Caco-2 (cell line): ENCODE measurements at regions of chr19 and their contacts with region 1.

Region 1: GRCh38 chr19:56140583-56141416 is at the start of gene ZNF444:
- DNase-seq: peak; percentile 99 to 100
- H3K4me3 ChIP-seq: peak within 1 kb of the TSS; percentile 70
- H3K4me3 Mint-ChIP-seq: peak within 1 kb of the TSS; percentile 87
- H3K27ac Mint-ChIP-seq: peak within 1 kb of the TSS; percentile 97
- H3K4me1 ChIP-seq: peaks cover 21% of the 10 kb centered on the region
- H3K4me1 Mint-ChIP-seq: peaks cover 36% of the 10 kb centered on the region
- H3K27me3 ChIP-seq: no peaks in the 10 kb centered on the region
- H3K27me3 Mint-ChIP-seq: no peaks in the 10 kb centered on the region
- CTCF ChIP-seq: no peak
- total RNA-seq, gene ZNF444: 92.2 and 95.6 TPM in 2 replicates

Region 2: GRCh38 chr19:54463531-54464043 is 1677.2 kb before region 1 on chr19 and contains the start of gene LENG9:
- CTCF ChIA-PET with region 1: no interaction called
- POLR2A ChIA-PET with region 1: no interaction called
- intact Hi-C with region 1: loop called (anchors 5 kb)
- DNase-seq: peak; percentile 99 to 100
- H3K4me3 ChIP-seq: peak within 1 kb of the TSS; percentile 81
- H3K4me3 Mint-ChIP-seq: peak within 1 kb of the TSS; percentile 92
- H3K27ac Mint-ChIP-seq: peak within 1 kb of the TSS; percentile 99
- H3K4me1 ChIP-seq: peaks cover 15% of the 10 kb centered on the region
- H3K4me1 Mint-ChIP-seq: peaks cover 25% of the 10 kb centered on the region
- H3K27me3 ChIP-seq: no peaks in the 10 kb centered on the region
- H3K27me3 Mint-ChIP-seq: no peaks in the 10 kb centered on the region
- CTCF ChIP-seq: no peak
- total RNA-seq, gene LENG9: 6.7 and 6.9 TPM in 2 replicates

Region 3: GRCh38 chr19:56053596-56053995 is 87.2 kb before region 1 on chr19:
- CTCF ChIA-PET with region 1: no interaction called
- POLR2A ChIA-PET with region 1: no interaction called
- intact Hi-C with region 1: no loop called
- DNase-seq: no peak
- H3K4me3 ChIP-seq: no peak overlapping the region
- H3K4me3 Mint-ChIP-seq: no peak overlapping the region
- H3K27ac Mint-ChIP-seq: no peak overlapping the region
- H3K4me1 ChIP-seq: no peaks in the 10 kb centered on the region
- H3K4me1 Mint-ChIP-seq: no peaks in the 10 kb centered on the region
- H3K27me3 ChIP-seq: no peaks in the 10 kb centered on the region
- H3K27me3 Mint-ChIP-seq: peaks cover 6% of the 10 kb centered on the region
- CTCF ChIP-seq: no peak

Region 4: GRCh38 chr19:56105090-56105701 is 35.6 kb before region 1 on chr19:
- CTCF ChIA-PET with region 1: no interaction called
- POLR2A ChIA-PET with region 1: no interaction called
- intact Hi-C with region 1: no loop called
- DNase-seq: peak in 1 of 2 experiments; percentile 56
- H3K4me3 ChIP-seq: no peak overlapping the region
- H3K4me3 Mint-ChIP-seq: no peak overlapping the region
- H3K27ac Mint-ChIP-seq: peak overlapping the region; percentile 48
- H3K4me1 ChIP-seq: no peaks in the 10 kb centered on the region
- H3K4me1 Mint-ChIP-seq: peaks cover 6% of the 10 kb centered on the region
- H3K27me3 ChIP-seq: no peaks in the 10 kb centered on the region
- H3K27me3 Mint-ChIP-seq: no peaks in the 10 kb centered on the region
- CTCF ChIP-seq: peak; percentile 36 to 46

Region 5: DNA sequence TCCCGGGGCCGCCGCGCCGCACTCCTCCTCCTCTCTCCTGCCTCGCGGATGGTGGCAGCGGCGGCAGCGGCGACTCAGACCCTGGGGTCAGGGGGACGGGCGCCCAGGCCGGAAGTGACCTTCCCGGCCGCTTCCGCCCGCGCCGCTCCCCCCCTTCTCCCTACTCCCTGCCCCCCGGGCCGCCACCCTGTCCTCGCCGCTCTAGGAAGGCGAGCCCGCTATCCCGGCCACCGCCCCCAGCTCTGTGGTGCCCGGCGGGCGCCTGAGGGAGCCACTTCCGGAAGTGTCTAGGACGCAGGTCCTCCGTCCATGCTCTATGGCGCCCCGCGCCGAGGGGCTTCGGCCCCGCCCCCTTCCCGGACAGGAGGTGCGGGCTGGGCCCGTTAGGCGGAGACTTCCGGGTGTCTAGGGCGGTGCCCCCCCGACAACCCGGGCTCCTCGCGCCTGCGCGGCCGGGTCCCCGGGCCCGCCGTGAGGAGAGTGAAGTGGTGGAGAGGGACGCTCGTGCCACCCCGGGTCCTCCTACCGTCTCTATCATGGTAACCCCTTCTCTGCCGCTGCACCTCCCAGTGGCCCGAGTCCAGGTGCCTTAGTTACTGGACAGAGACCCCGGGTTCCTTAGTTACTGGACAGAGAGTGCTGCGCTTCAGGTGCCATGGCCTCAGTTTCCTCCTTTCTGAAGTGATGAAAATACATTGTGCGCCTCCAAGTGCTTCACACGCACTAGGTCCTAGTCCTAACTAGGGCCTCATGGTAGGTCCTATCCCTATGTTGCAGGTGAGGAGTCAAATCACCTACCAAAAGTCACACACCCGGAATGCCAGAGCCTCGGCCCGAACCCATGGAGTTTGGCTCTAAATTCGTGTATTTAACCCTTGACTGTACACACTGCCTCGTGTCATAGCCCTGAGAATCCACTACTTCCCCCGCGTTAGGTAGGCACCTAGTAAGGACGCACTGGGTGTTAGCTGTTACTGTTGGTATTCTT is 19.3 kb before region 1 on chr19 and contains the start of gene ZNF787:
- CTCF ChIA-PET with region 1: no interaction called
- POLR2A ChIA-PET with region 1: interaction called, 10 read pairs
- intact Hi-C with region 1: loop called (anchors 1 kb)
- DNase-seq: peak; percentile 99 to 100
- H3K4me3 ChIP-seq: peak within 1 kb of the TSS; percentile 97
- H3K4me3 Mint-ChIP-seq: peak within 1 kb of the TSS; percentile 89
- H3K27ac Mint-ChIP-seq: peak within 1 kb of the TSS; percentile 82
- H3K4me1 ChIP-seq: peaks cover 17% of the 10 kb centered on the region
- H3K4me1 Mint-ChIP-seq: peaks cover 12% of the 10 kb centered on the region
- H3K27me3 ChIP-seq: no peaks in the 10 kb centered on the region
- H3K27me3 Mint-ChIP-seq: no peaks in the 10 kb centered on the region
- CTCF ChIP-seq: no peak
- total RNA-seq, gene ZNF787: 58.1 and 60.0 TPM in 2 replicates

Region 6: DNA sequence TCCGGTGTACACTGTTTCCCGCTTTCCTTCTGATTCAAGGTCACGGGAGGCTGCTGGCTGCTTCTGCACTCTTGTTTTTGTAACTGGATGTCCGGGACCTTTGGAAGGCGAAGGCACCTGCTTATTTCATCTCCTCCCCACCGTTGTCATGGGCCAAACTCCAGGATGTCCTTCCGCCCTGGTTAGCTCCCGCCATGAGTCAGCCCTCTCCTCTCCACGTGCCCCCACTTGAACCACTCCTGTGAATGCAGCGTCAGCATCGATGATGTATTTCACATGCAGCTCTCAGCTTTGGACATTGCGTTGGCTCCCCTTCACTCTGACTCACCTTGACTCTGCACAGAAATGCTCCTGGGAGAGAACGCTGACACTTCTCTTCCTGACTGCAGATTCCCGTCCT is 29.5 kb after region 1 on chr19:
- CTCF ChIA-PET with region 1: no interaction called
- POLR2A ChIA-PET with region 1: no interaction called
- intact Hi-C with region 1: loop called (anchors 2 kb)
- DNase-seq: no peak
- H3K4me3 ChIP-seq: no peak overlapping the region
- H3K4me3 Mint-ChIP-seq: no peak overlapping the region
- H3K27ac Mint-ChIP-seq: no peak overlapping the region
- H3K4me1 ChIP-seq: no peaks in the 10 kb centered on the region
- H3K4me1 Mint-ChIP-seq: peaks cover 1% of the 10 kb centered on the region
- H3K27me3 ChIP-seq: no peaks in the 10 kb centered on the region
- H3K27me3 Mint-ChIP-seq: peaks cover 6% of the 10 kb centered on the region
- CTCF ChIP-seq: no peak

Region 7: GRCh38 chr19:56270676-56271075 is 129.9 kb after region 1 on chr19:
- CTCF ChIA-PET with region 1: no interaction called
- POLR2A ChIA-PET with region 1: no interaction called
- intact Hi-C with region 1: no loop called
- DNase-seq: no peak
- H3K4me3 ChIP-seq: no peak overlapping the region
- H3K4me3 Mint-ChIP-seq: no peak overlapping the region
- H3K27ac Mint-ChIP-seq: no peak overlapping the region
- H3K4me1 ChIP-seq: no peaks in the 10 kb centered on the region
- H3K4me1 Mint-ChIP-seq: peaks cover 6% of the 10 kb centered on the region
- H3K27me3 ChIP-seq: no peaks in the 10 kb centered on the region
- H3K27me3 Mint-ChIP-seq: no peaks in the 10 kb centered on the region
- CTCF ChIP-seq: no peak

Region 8: DNA sequence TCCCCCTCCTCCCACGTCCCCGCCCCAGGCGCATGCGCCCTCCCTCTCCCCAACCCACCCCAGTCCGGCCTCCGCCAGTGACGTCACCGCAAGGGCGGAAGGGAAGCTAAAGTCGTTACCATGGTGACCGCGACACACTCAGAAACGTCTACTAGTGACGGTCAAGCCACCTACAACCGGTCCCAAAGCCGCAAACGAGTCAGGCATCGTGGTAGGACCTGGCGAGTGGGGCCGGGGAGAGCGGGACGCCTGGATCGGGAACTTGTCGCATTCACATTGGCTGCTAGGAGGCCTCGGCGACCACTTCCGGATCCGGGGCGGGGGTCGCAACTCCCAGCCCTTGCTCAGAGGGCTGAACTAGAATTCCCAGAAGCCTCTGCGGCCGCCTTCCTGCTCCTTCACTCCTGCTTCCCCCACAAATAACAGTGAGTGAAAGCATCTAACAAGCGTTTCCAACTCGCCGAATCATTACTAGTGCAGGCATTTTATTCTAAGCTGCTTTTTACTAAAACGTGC is 173.8 kb after region 1 on chr19 and contains the start of gene ZSCAN5A:
- CTCF ChIA-PET with region 1: no interaction called
- POLR2A ChIA-PET with region 1: interaction called, 7 read pairs
- intact Hi-C with region 1: loop called (anchors 1 kb)
- DNase-seq: peak; percentile 95 to 97
- H3K4me3 ChIP-seq: peak within 1 kb of the TSS; percentile 66
- H3K4me3 Mint-ChIP-seq: peak within 1 kb of the TSS; percentile 86
- H3K27ac Mint-ChIP-seq: peak within 1 kb of the TSS; percentile 98
- H3K4me1 ChIP-seq: peaks cover 9% of the 10 kb centered on the region; the same call in 1 of the 2 replicates
- H3K4me1 Mint-ChIP-seq: peaks cover 12% of the 10 kb centered on the region
- H3K27me3 ChIP-seq: no peaks in the 10 kb centered on the region
- H3K27me3 Mint-ChIP-seq: no peaks in the 10 kb centered on the region
- CTCF ChIP-seq: no peak
- total RNA-seq, gene ZSCAN5A: 10.9 and 11.3 TPM in 2 replicates